Heart right ventricle (tissue), 16 donors: ENCODE measurements at regions of chr1 and their contacts with region 1.

Region 1: DNA sequence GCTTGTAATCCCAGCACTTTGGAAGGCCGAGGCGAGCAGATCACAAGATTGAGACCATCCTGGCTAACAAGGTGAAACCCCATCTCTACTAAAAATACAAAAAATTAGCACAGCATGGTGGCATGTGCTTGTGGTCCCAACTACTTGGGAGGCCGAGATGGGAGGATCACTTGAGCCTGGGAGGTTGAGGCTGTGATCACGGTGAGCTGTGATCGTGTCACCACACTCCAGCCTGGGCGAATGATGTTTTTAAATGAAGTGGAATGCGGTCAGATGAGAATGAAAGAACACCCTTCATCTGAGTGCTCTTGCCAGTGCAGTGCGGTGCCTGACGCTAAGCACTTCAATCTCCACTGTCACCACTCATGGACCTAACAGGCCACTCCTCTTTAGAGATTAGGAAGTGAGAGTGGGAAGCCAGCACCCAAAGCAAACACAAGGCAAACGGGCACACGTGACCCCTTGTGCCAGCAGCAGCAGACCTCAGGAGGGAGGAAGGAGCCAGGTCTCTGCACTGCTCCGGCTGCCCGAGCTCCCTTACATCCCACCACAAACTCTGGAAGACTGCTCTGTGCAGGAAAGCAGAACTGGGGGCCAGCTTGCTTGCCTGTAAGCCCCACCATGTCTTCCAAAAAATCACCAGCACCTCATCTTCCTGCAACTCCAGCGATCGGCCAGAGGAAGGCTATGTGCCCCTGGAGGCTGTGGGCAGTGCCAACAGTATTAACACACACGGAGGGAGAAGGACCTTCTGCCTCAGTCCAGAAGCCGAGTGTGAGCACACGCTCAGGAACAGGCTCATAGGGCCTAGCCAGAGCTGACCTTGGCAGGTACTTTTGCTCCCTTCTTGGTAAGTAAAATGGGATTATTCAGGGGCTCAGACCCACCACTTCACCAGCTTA is 9.7 kb downstream of the CTNNBIP1 start:
- DNase-seq: peak; percentile 71 to 85
- ATAC-seq: peak; percentile 88 to 94 (median 92)
- H3K4me3 ChIP-seq: peak overlapping the region in 9 of 10 donors; percentile 11 to 50 (median 39)
- H3K27ac ChIP-seq: peak overlapping the region; percentile 83 to 95 (median 91)
- H3K4me1 ChIP-seq: peaks cover 27 to 76% (median 51%) of the 10 kb centered on the region in 9 donors
- H3K27me3 ChIP-seq: no peaks in the 10 kb centered on the region
- CTCF ChIP-seq: peak in 1 of 9 donors; percentile 10

Region 2: GRCh38 chr1:9910425-9911178 is 10.2 kb after region 1 on chr1:
- intact Hi-C with region 1: loop called in 1 of 10 experiments (anchors 1 kb)
- DNase-seq: peak; percentile 100
- ATAC-seq: peak; percentile 97 to 99 (median 98)
- H3K4me3 ChIP-seq: peak overlapping the region; percentile 20 to 64 (median 59)
- H3K27ac ChIP-seq: peak overlapping the region; percentile 85 to 99 (median 92)
- H3K4me1 ChIP-seq: peaks cover 5 to 67% (median 32%) of the 10 kb centered on the region in 9 donors
- H3K27me3 ChIP-seq: no peaks in the 10 kb centered on the region
- CTCF ChIP-seq: peak in 1 of 9 donors; percentile 8

Region 3: DNA sequence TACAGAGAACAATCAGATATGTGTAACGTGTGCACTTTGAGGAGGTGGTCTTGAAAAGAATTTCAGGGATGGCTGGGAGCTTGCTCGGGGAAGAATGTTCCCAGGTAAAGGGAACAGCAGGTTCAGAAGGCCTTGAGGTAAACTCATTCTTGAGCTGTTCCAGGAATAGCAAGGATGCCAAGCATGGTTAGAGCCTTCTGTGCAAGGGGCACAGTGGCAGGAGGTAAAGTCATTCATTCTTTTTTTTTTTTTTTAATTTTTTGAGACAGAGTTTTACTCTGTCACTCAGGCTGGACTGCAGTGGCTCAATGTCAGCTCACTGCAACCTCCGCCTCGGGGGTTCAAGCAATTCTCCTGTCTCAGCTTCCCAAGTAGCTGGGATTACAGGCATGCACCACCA is 142.4 kb after region 1 on chr1:
- intact Hi-C with region 1: no loop called
- DNase-seq: no peak
- ATAC-seq: no peak
- H3K4me3 ChIP-seq: no peak overlapping the region
- H3K27ac ChIP-seq: no peak overlapping the region
- H3K4me1 ChIP-seq: peaks cover 4 to 33% (median 28%) of the 10 kb centered on the region in 9 donors
- H3K27me3 ChIP-seq: no peaks in the 10 kb centered on the region
- CTCF ChIP-seq: no peak